AG04450 (cell line): ENCODE measurements at regions of chr5 and their contacts with region 1.

Region 1: DNA sequence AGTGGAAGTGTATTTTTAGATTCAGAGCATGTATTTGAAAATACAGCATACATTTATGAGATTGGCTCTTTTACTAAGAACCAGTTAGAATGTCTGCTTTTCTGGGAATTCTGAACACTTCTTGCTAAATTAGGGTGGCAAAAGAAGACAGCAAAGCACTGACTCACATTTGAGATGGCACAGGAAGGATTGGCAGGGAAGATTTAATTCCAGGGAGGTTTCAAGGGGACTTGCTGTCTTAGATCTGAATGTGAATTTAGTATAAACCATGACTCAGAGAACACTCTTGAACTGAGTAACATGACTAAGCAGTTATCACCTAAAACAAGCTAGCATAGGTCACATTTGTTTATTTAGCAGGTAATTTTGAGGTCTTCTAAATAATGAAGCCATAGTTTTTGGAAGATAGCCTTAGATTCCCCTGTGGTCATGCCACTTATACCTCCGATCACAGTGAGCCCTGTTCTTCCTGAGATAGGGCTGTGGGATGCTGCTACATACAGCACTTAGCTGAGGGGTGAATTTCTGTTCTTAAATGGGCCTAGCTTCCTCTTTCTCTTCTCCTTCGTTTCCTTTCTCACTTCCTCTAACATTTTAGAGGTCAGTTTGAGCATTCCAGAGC is 173.8 kb downstream of the PCSK1 start:
- DNase-seq: no peak
- H3K4me3 ChIP-seq: no peak overlapping the region
- H3K27ac ChIP-seq: peak overlapping the region; percentile 90
- H3K27me3 ChIP-seq: no peaks in the 10 kb centered on the region
- CTCF ChIP-seq: no peak

Region 2: DNA sequence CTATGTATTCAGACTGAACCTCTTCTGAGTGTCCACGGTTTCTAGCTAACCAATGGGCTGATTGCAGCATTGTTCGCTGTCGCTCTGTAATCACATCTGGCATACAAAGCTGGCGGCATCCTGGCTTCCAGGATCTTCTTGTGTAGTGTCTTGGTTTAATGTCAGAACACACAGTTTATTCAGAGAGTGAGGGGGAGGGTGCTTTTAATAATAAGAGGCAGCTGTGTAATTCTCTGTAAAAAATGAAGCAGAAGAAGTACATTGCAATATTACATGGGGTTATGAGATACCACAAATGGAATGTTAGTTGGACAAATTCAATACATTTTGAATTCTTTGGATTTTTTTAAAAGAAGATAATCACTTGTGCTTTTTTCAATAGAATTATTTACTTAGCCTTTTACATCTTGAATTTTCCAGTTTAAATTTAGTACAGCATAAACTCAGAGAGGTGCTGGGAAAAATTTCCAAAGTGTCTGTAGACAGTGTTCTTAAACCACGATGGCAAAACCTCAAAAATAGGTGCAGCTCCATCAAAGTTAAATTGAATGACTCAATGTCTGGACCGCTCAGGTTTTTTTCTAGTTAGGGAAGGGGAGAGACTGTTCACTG is 32.2 kb before region 1 on chr5:
- CTCF ChIA-PET with region 1: no interaction called
- POLR2A ChIA-PET with region 1: interaction called, 15 read pairs
- DNase-seq: peak; percentile 87
- H3K4me3 ChIP-seq: peak overlapping the region; percentile 8; the same call in 1 of the 2 replicates
- H3K27ac ChIP-seq: peak overlapping the region; percentile 90
- H3K27me3 ChIP-seq: no peaks in the 10 kb centered on the region
- CTCF ChIP-seq: no peak

Region 3: GRCh38 chr5:96297290-96297689 is 38.0 kb after region 1 on chr5:
- CTCF ChIA-PET with region 1: no interaction called
- POLR2A ChIA-PET with region 1: interaction called, 18 read pairs
- DNase-seq: peak; percentile 89
- H3K4me3 ChIP-seq: no peak overlapping the region
- H3K27ac ChIP-seq: peak overlapping the region; percentile 85
- H3K27me3 ChIP-seq: no peaks in the 10 kb centered on the region
- CTCF ChIP-seq: no peak